BJ (cell line): ENCODE measurements at regions of chr17 and their contacts with region 1.

Region 1: GRCh38 chr17:12406623-12407215 is 259.0 kb upstream of the MYOCD start:
- DNase-seq: no peak
- H3K4me3 ChIP-seq: no peak overlapping the region
- H3K27me3 ChIP-seq: no peaks in the 10 kb centered on the region
- CTCF ChIP-seq: no peak

Region 2: GRCh38 chr17:12395733-12396354 is 10.9 kb before region 1 on chr17:
- CTCF ChIA-PET with region 1: interaction called, 11 read pairs
- POLR2A ChIA-PET with region 1: no interaction called
- DNase-seq: no peak
- H3K4me3 ChIP-seq: no peak overlapping the region
- H3K27me3 ChIP-seq: no peaks in the 10 kb centered on the region
- CTCF ChIP-seq: peak; percentile 64